HCT116 (cell line): ENCODE measurements at regions of chr7 and their contacts with region 1.

Region 1: GRCh38 chr7:104883718-104884452 is 130.1 kb upstream of the KMT2E start:
- DNase-seq: peak; percentile 84
- ATAC-seq: peak; percentile 99
- H3K4me3 ChIP-seq: no peak overlapping the region
- H3K27ac ChIP-seq: no peak overlapping the region
- H3K4me1 ChIP-seq: peaks cover 3 to 11% of the 10 kb centered on the region in 2 experiments; a peak in 3 of 4 replicates
- H3K27me3 ChIP-seq: no peaks in the 10 kb centered on the region
- CTCF ChIP-seq: peak; percentile 79 to 97 (median 96)
- POLR2A ChIP-seq: no peak
- RAD21 ChIP-seq: peak; percentile 76

Region 2: DNA sequence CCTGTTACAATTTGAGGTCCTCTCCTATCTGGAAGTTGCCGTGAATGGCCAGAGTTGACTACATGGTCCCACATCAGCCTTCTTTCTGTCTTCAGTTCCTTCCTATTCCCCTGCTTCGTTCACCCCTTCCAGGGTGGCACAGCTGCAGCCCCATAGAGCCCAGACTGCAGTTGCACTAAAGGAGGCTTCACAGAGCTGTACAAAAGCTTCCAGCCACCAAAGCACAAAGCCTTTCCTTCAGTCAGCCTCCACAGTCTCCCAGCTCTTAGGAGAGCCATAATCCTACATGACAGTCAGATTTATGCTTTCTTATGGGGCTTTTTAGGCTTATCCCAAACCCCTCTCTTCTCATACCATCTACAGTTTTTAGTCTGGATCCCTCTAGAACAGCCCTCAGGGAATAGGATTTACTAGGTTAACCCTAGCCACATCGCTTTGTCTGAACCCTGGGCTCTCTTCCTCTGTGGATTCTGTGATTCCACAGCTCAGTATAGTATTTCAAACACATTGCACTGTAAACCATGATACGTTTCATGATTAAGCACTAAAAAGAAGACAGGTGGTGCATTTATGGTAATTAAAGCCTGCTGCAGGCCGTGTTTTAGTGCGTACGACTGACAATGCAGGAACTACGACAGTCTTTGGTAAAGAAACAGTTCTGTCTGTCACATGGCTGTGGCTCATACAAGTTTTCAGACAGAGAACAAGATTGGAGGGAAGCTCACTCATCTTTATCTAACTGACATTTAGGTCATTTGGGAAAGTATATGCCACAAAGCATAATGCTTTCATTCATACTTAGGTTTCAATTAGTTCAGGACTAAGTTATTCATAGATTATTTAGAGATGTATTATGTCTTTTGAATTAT is 78.2 kb before region 1 on chr7:
- CTCF ChIA-PET with region 1: no interaction called
- POLR2A ChIA-PET with region 1: no interaction called
- RAD21 ChIA-PET with region 1: no interaction called
- intact Hi-C with region 1: no loop called
- DNase-seq: no peak
- ATAC-seq: no peak
- H3K4me3 ChIP-seq: no peak overlapping the region
- H3K27ac ChIP-seq: no peak overlapping the region
- H3K4me1 ChIP-seq: no peaks in the 10 kb centered on the region
- H3K27me3 ChIP-seq: peaks cover 92% of the 10 kb centered on the region
- CTCF ChIP-seq: no peak
- POLR2A ChIP-seq: no peak
- RAD21 ChIP-seq: no peak

Region 3: DNA sequence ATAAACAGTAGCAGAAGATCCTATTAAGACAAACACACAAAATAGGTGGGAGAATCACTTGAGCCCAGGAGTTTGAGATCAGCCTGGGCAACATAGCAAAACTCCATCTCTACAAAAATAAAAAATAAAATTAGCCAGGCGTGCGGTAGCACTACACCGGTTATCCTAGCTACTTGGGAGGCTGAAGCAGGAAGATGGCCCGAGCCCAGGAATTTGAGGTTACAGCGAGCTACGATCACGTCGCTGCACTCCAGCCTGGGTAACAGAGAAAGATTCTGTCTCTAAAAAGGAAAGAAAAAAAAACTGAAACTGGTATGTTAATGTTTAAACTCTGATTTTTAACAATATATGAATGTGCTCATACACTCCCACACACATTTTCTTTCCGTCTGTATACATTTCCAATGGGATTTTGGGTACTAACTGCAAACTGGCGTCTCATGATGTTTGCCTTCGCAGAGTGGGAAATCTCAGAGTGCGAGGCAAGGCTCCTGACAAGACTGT is 10.5 kb before region 1 on chr7:
- CTCF ChIA-PET with region 1: interaction called, 19 read pairs
- POLR2A ChIA-PET with region 1: no interaction called
- RAD21 ChIA-PET with region 1: no interaction called
- intact Hi-C with region 1: no loop called
- DNase-seq: no peak
- ATAC-seq: no peak
- H3K4me3 ChIP-seq: no peak overlapping the region
- H3K27ac ChIP-seq: no peak overlapping the region
- H3K4me1 ChIP-seq: no peaks in the 10 kb centered on the region
- H3K27me3 ChIP-seq: no peaks in the 10 kb centered on the region
- CTCF ChIP-seq: no peak
- POLR2A ChIP-seq: no peak
- RAD21 ChIP-seq: no peak

Region 4: GRCh38 chr7:104894726-104895521 is 11.0 kb after region 1 on chr7:
- CTCF ChIA-PET with region 1: interaction called, 20 read pairs
- POLR2A ChIA-PET with region 1: no interaction called
- RAD21 ChIA-PET with region 1: no interaction called
- intact Hi-C with region 1: no loop called
- DNase-seq: no peak
- ATAC-seq: no peak
- H3K4me3 ChIP-seq: no peak overlapping the region
- H3K27ac ChIP-seq: no peak overlapping the region
- H3K4me1 ChIP-seq: no peaks in the 10 kb centered on the region
- H3K27me3 ChIP-seq: no peaks in the 10 kb centered on the region
- CTCF ChIP-seq: no peak
- POLR2A ChIP-seq: no peak
- RAD21 ChIP-seq: no peak